ENCODE measurements at regions of chr3 and their contacts with region 1.

Region 1: GRCh38 chr3:44338010-44338827 is at the start of gene TCAIM:
- DNase-seq: peak; percentile 98
- H3K4me3 Mint-ChIP-seq: peak within 1 kb of the TSS; percentile 98
- H3K27ac Mint-ChIP-seq: peak within 1 kb of the TSS; percentile 97
- H3K4me1 Mint-ChIP-seq: peaks cover 17% of the 10 kb centered on the region
- H3K27me3 Mint-ChIP-seq: peaks cover 4% of the 10 kb centered on the region
- total RNA-seq, gene TCAIM: 13.6 and 14.4 TPM in 2 replicates

Region 2: DNA sequence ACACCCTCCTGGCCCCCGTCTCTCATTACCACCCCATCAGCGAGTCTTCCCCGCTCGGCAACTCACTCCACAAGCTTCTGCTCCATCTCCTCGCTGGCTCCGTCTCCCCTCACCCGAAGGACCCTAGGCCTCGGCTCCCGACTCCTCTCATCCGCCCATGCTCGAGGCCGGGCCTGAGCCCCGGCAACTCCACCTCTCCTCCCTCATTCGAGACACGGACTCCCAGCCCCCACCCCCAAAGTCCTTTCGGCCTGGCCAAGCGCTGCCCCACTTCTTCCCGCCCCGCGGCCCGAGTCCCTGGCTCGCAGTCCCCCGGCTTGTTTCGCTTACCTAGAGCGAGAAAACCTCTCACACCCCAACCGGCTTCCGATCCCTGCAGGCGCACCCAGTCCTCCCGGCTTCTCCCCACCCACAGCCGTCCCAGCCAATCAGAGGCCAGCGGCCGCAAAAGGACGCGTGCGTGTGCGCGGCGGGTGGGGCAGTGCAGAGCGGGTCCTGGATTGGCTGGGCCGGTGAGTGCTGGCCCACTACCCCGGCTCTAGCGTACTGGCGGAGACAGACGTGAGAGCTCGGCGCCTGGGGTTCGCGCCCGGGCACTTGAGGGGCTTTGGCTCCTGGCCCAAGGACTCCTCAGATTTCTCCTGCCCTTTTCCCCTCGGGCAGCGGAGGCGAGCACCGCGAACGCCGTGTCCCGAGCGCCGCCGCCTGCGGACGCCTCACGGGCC is 1534.0 kb before region 1 on chr3 and contains the start of gene HIGD1A:
- intact Hi-C with region 1: loop called (anchors 10 kb)
- DNase-seq: peak; percentile 92
- H3K4me3 Mint-ChIP-seq: peak within 1 kb of the TSS; percentile 99
- H3K27ac Mint-ChIP-seq: peak within 1 kb of the TSS; percentile 90
- H3K4me1 Mint-ChIP-seq: peaks cover 43% of the 10 kb centered on the region
- H3K27me3 Mint-ChIP-seq: peaks cover 27% of the 10 kb centered on the region
- total RNA-seq, gene HIGD1A: 90.1 and 97.5 TPM in 2 replicates

Region 3: DNA sequence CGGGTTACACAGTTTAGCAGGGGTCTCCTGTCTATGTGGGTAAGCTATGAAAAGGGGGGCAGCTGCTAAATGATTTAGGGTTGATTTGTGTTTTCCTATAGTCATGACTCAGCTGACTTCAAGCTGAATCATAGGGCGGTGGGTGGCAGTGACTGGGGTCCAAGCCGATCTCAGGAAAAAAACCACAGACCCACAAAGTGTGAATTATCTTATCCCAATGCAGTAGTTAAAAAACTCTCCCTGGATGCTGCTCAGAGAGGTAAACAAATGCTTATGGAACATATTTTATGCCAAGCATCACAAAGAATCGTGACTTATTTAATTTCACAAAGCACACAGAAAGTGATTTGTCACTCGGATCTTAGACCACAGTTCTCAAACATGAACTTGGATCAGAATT is 114.9 kb before region 1 on chr3:
- intact Hi-C with region 1: no loop called
- DNase-seq: no peak
- H3K4me3 Mint-ChIP-seq: no peak overlapping the region
- H3K27ac Mint-ChIP-seq: no peak overlapping the region
- H3K4me1 Mint-ChIP-seq: no peaks in the 10 kb centered on the region
- H3K27me3 Mint-ChIP-seq: peaks cover 9% of the 10 kb centered on the region

Region 4: DNA sequence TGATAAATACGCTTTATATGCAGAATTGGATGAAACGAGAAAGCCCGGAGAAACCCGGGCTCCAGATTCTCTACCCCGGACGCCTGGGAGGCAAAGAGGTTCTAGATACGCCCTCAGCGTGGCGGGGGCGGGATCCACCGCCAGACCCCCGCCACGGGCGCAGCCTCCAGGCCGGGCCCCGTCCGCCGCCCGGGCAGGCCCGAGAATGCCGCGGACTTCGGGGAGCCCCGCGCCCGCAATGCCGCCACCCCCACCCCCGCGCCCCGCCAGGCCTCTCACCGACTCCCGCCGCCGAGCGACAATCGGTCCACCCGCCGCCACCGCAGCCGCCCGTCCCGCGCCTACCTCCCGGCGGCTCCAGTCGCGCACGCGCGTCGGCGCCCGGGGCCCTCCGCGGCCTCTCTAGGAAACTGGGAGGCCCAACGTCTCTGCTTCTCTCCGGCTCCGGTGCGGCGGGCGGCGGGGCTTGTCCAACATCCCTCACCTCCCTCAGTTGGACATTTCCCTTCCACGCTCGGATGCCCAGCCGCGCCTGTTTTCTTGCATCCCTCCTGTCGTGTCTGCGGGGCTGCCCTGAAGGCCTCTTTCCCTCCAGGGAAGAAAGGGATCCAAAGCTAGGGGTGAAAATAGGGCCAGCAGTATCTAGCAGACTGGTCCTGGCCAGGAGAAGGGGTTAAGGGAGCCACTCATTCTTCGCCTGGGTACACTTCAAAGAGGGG is 139.3 kb after region 1 on chr3 and contains the start of gene ZNF445:
- intact Hi-C with region 1: loop called (anchors 1 kb)
- DNase-seq: peak; percentile 76
- H3K4me3 Mint-ChIP-seq: peak within 1 kb of the TSS; percentile 88
- H3K27ac Mint-ChIP-seq: peak within 1 kb of the TSS; percentile 78
- H3K4me1 Mint-ChIP-seq: peaks cover 24% of the 10 kb centered on the region
- H3K27me3 Mint-ChIP-seq: no peaks in the 10 kb centered on the region
- total RNA-seq, gene ZNF445: 18.7 and 19.3 TPM in 2 replicates

Region 5: DNA sequence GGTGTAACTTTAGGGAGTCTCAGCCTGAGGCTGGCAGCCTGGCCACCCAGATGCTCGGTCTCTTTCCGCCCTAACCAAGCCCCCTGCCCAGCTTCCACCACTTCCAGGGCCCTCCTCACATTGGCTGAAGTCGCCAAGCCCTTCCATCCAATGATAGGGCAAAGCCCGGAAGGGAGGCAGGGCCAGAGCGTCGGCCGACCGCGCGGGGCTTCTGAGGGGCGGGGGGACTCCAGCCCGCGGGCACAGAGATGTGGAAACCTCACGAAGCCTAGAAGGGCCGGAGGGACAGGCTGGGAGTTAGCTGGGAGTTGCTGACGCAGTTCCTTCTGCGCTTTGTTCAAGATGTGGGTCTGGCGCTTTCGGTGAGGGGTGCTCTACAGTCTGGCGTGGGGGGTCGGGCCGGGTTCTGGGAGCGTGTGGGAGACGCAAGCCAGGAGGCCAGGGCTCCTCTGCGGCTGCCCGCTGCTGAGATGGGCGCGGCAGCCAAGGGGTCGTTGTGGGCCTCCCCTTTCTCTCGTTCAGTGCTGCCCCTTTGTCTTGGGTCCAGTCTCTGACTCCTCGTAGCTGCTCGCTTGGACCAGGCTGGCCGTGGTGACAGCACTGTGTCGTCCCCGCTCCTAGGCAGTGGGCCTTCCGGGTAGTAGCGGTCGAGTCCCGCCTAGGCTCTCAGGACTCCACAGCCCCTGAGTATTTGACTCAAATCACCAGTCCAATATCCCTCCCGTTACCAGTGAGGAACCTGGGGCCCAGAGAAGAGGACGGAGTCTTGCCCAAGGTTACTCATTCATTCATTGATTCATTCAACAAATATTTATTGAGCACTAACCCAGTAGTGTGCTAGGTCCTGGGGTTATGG is 246.7 kb after region 1 on chr3 and contains the start of gene ZNF660:
- intact Hi-C with region 1: no loop called
- DNase-seq: no peak
- H3K4me3 Mint-ChIP-seq: peak within 1 kb of the TSS; percentile 30
- H3K27ac Mint-ChIP-seq: no peak within 1 kb of the TSS
- H3K4me1 Mint-ChIP-seq: no peaks in the 10 kb centered on the region
- H3K27me3 Mint-ChIP-seq: peaks cover 18% of the 10 kb centered on the region
- total RNA-seq, gene ZNF660: 0.21 TPM in 1 of 2 replicates, not detected in the other

Region 6: GRCh38 chr3:44624749-44625480 is 286.7 kb after region 1 on chr3 and contains the start of gene ZNF197:
- intact Hi-C with region 1: loop called (anchors 2 kb)
- DNase-seq: peak; percentile 54
- H3K4me3 Mint-ChIP-seq: peak within 1 kb of the TSS; percentile 90
- H3K27ac Mint-ChIP-seq: peak within 1 kb of the TSS; percentile 80
- H3K4me1 Mint-ChIP-seq: peaks cover 25% of the 10 kb centered on the region
- H3K27me3 Mint-ChIP-seq: no peaks in the 10 kb centered on the region
- total RNA-seq, gene ZNF197: 11.6 and 12.0 TPM in 2 replicates

Region 7: GRCh38 chr3:44976002-44976815 is 638.0 kb after region 1 on chr3 and contains the starts of genes EXOSC7 and ZDHHC3:
- intact Hi-C with region 1: loop called (anchors 1 kb)
- DNase-seq: peak; percentile 81
- H3K4me3 Mint-ChIP-seq: peak within 1 kb of the TSS; percentile 99
- H3K27ac Mint-ChIP-seq: peak within 1 kb of the TSS; percentile 96
- H3K4me1 Mint-ChIP-seq: peaks cover 58% of the 10 kb centered on the region
- H3K27me3 Mint-ChIP-seq: no peaks in the 10 kb centered on the region
- total RNA-seq, gene EXOSC7: 93.6 and 94.4 TPM in 2 replicates
- total RNA-seq, gene ZDHHC3: 46.6 and 47.5 TPM in 2 replicates

Measured in activated T-helper 1 cell treated with anti-CD3 and anti-CD28 coated beads, Interleukin-12 subunit alpha, Interleukin-12 subunit beta, Interleukin-2, Interleukin-4 antibody, amounts not matched to agents 30 ng/mL and 10 ng/mL and 1 ng/mL, durations not matched to agents 14 hours and 24 hours and 36 hours (primary cell).